ENCODE measurements at regions of chr6 and their contacts with region 1.

Region 1: DNA sequence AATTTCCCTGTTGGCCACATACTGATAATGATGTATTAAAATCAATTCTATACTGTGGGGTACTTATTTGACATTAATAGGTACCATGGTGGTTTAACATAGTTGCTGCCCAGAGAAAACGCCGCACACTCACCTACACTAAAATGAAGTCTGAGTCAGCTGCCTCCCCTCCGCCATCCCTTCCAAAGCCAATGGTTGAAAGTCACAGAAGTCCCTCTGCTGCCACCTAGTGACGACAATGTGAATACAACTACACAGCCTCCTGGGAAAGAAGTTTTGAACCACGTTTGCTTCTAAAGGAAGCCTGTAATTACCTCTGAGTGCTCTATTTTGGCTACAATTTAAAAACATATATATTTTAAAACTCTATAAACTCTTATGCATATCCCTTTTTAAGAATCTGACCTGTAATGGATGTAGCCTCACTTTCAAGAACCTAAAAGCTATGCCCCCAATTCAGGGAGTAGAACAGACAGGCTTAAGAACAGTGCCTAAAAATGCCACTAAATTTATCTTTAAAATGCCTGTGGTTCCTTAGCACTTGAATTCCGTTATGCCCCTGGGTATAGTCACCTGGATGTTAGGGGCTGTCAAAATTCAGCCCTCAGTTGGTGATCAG is 20.6 kb upstream of the ECI2 start:
- DNase-seq: peak in 1 of 2 experiments; percentile 82
- H3K4me3 ChIP-seq: no peak overlapping the region
- H3K27ac ChIP-seq: no peak overlapping the region
- H3K4me1 ChIP-seq: no peaks in the 10 kb centered on the region
- H3K27me3 ChIP-seq: no peaks in the 10 kb centered on the region
- CTCF ChIP-seq: peak; percentile 47 to 79 (median 79)
- EP300 ChIP-seq: no peak
- POLR2A ChIP-seq: no peak
- RAD21 ChIP-seq: peak; percentile 84 to 90

Region 2: GRCh38 chr6:4055420-4056041 is 100.4 kb before region 1 on chr6:
- CTCF ChIA-PET with region 1: interaction called, 10 read pairs
- POLR2A ChIA-PET with region 1: no interaction called
- DNase-seq: no peak
- H3K4me3 ChIP-seq: no peak overlapping the region
- H3K27ac ChIP-seq: no peak overlapping the region
- H3K4me1 ChIP-seq: no peaks in the 10 kb centered on the region
- H3K27me3 ChIP-seq: no peaks in the 10 kb centered on the region
- CTCF ChIP-seq: no peak
- EP300 ChIP-seq: no peak
- POLR2A ChIP-seq: no peak
- RAD21 ChIP-seq: peak; percentile 27 to 30; a peak in 3 of 4 replicates

Region 3: DNA sequence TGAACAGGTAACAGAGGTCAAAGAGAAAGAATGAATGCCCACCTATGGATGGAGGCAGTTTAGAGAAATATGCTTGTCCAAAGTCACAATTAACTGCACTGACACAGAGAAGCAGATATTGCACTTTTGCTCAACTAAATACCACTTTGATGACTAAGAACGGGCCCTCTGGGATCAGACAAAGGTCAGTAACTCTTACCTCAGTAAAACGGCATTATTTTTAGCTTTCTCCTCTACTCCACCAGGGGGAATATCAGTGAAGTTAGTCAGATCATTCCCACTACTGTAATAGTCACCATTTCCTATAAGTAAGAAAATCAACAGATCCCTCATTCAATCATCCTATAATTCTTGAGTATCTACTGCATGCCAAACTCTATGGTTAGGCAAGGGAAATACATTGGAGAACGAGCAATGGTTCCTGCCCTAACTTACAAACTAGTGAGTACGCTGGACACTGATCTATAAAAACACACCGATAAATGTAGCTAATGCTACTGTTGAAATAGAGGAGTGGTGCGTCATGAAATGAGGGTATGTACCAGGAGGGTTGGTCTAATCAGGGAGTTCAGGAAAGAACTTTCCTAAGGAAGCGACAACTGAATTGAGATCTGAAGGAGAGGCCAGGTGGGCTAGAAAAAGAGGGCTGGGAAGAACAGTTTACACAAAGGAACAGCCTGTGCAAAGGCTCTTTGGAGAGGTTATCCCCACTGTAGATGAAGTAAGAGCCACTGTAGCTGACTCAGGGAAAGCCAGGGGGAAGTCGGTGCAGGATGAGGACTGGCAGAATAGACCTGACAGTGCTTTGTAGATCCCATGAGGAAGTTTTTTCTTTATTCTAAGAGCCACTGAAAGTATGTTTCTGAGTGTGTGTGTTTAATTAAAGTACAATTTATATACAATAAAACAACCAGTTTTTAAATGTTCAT is 29.8 kb before region 1 on chr6:
- CTCF ChIA-PET with region 1: interaction called, 16 read pairs
- POLR2A ChIA-PET with region 1: no interaction called
- DNase-seq: no peak
- H3K4me3 ChIP-seq: no peak overlapping the region
- H3K27ac ChIP-seq: no peak overlapping the region
- H3K4me1 ChIP-seq: no peaks in the 10 kb centered on the region
- H3K27me3 ChIP-seq: no peaks in the 10 kb centered on the region
- CTCF ChIP-seq: peak in 1 of 3 experiments; percentile 4; a peak in 1 of 4 replicates
- EP300 ChIP-seq: no peak
- POLR2A ChIP-seq: no peak
- RAD21 ChIP-seq: no peak

Region 4: GRCh38 chr6:4135665-4136353 is 20.1 kb before region 1 on chr6:
- CTCF ChIA-PET with region 1: interaction called, 22 read pairs
- POLR2A ChIA-PET with region 1: interaction called, 5 read pairs
- DNase-seq: peak; percentile 82 to 92
- H3K4me3 ChIP-seq: peak overlapping the region; percentile 39 to 84 (median 58)
- H3K27ac ChIP-seq: peak overlapping the region; percentile 49; the same call in 1 of the 2 replicates
- H3K4me1 ChIP-seq: peaks cover 2 to 5% (median 4%) of the 10 kb centered on the region in 4 experiments; a peak in 5 of 7 replicates
- H3K27me3 ChIP-seq: no peaks in the 10 kb centered on the region
- CTCF ChIP-seq: no peak
- EP300 ChIP-seq: no peak
- POLR2A ChIP-seq: peak; percentile 12 to 45; a peak in 2 of 3 replicates
- RAD21 ChIP-seq: no peak

Region 5: GRCh38 chr6:4196359-4196758 is 40.4 kb after region 1 on chr6:
- CTCF ChIA-PET with region 1: no interaction called
- POLR2A ChIA-PET with region 1: no interaction called
- DNase-seq: no peak
- H3K4me3 ChIP-seq: no peak overlapping the region
- H3K27ac ChIP-seq: no peak overlapping the region
- H3K4me1 ChIP-seq: no peaks in the 10 kb centered on the region
- H3K27me3 ChIP-seq: no peaks in the 10 kb centered on the region
- CTCF ChIP-seq: no peak
- EP300 ChIP-seq: no peak
- POLR2A ChIP-seq: no peak
- RAD21 ChIP-seq: no peak

Region 6: DNA sequence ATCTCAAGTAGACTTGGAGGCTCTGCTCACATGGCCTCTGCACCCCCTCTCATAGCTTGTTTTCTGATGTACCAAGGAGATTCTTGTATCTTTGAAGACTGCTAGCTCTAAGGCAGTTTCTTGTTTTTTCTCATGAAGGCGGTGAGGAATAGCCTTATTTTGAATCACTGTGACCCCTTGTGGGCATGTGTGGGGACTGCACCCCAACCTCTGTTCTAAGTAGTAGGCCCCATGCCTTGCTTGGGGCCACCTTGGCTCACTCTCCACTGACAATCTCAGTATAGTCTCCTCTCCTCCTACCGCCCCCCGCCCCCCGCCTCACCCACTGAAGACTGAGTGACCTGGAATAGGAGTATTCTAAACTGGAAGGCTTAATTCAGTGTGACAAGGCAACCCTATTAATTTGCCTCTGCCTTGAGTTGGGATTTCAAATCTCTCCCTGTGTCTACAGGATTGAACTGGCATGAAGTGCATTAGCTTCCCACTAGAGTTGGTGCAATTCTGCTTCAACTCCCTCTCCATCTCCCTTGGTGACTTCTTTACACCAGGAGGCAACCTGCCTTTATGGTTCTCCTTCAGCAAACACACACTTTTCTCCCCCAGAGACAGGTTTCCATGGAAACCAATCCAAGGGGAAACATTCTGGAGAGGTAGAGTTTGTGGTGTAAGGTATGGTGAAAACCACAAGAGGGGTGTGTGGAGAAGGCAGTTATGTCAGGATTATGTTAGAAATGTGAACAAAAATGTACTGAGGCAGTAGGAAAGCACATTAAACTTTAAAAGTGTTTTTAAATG is 54.9 kb after region 1 on chr6:
- CTCF ChIA-PET with region 1: interaction called, 12 read pairs
- POLR2A ChIA-PET with region 1: no interaction called
- DNase-seq: peak; percentile 49 to 87
- H3K4me3 ChIP-seq: no peak overlapping the region
- H3K27ac ChIP-seq: no peak overlapping the region
- H3K4me1 ChIP-seq: no peaks in the 10 kb centered on the region
- H3K27me3 ChIP-seq: no peaks in the 10 kb centered on the region
- CTCF ChIP-seq: peak; percentile 70 to 85 (median 75)
- EP300 ChIP-seq: no peak
- POLR2A ChIP-seq: no peak
- RAD21 ChIP-seq: peak; percentile 80 to 84